ENCODE measurements at regions of chr3 and their contacts with region 1.

Region 1: DNA sequence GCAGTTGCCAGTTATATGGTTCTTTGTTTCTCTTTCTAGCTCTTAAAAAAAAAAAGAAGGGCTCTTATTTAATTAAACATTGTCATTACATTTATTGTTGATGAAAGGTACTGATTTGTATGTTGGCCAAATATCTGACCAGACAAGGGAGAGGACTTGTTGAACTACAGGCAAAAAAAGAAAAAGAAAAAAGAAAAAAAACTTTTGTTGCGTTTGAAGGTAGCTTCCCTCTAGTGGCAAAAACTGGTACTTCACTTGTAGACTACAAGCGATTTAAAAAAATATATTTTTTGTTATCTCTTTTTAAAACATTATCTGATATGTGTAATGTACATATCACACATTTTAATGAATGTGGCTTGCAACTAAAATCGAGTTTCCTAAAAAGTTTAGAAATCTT is 280.6 kb downstream of the ROBO2 start:
- DNase-seq: peak; percentile 21
- H3K4me3 ChIP-seq: no peak overlapping the region
- H3K27ac ChIP-seq: no peak overlapping the region
- H3K4me1 ChIP-seq: no peaks in the 10 kb centered on the region; a peak in 1 of 4 replicates
- H3K27me3 ChIP-seq: no peaks in the 10 kb centered on the region
- CTCF ChIP-seq: peak; percentile 80
- EP300 ChIP-seq: no peak
- RAD21 ChIP-seq: peak; percentile 52

Region 2: DNA sequence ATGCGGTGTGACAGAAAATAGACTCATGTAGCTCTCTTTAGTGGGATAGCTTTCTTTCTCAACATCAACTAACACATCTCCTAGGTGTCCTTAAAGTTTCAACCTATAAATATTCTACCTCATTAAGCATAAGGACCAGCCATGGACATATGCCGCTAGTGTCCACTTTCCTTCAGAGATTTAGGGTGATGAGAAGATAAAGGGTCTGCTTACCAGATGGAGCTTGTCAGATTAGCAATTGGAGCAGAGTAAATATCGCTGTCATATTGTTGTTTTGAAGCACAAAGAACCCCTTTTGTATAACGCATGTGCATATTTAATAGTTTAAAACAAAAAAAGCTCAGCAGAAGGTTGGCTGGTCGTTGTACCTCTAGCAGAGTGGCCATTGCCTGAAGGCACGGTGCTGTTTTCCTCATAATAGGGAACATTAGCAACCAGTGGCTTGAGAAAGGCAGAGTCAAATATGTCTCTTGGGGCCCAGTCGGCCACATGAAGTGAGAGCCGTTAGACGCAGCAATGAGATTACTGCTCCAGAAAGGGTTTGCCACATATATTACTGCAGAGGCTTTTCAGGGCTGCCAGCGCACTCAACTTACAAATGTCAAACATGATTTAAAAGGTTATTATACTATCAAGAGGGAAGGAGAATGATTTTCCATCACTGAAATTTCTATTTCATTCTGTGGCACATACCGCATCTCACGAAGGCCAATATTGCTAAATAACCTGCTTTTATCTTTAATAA is 16.4 kb before region 1 on chr3:
- CTCF ChIA-PET with region 1: interaction called, 36 read pairs
- POLR2A ChIA-PET with region 1: no interaction called
- DNase-seq: no peak
- H3K4me3 ChIP-seq: no peak overlapping the region
- H3K27ac ChIP-seq: peak overlapping the region in 1 of 2 experiments; percentile 62; a peak in 2 of 4 replicates
- H3K4me1 ChIP-seq: no peaks in the 10 kb centered on the region; a peak in 2 of 4 replicates
- H3K27me3 ChIP-seq: no peaks in the 10 kb centered on the region
- CTCF ChIP-seq: no peak
- EP300 ChIP-seq: no peak
- RAD21 ChIP-seq: no peak

Measured in SK-N-SH (cell line).